Activated CD4-positive, alpha-beta T cell treated with anti-CD3 and anti-CD28 coated beads for 36 hours (primary cell): ENCODE measurements at regions of chr18 and their contacts with region 1.

Region 1: GRCh38 chr18:13137670-13138419 is 80.7 kb upstream of the LDLRAD4 start:
- DNase-seq: peak; percentile 76
- ATAC-seq: peak; percentile 78
- H3K4me3 Mint-ChIP-seq: peak overlapping the region; percentile 83
- H3K27ac Mint-ChIP-seq: peak overlapping the region; percentile 86
- H3K4me1 Mint-ChIP-seq: peaks cover 24% of the 10 kb centered on the region
- H3K27me3 Mint-ChIP-seq: peaks cover 2% of the 10 kb centered on the region

Region 2: GRCh38 chr18:12327510-12328178 is 810.2 kb before region 1 on chr18:
- CTCF ChIA-PET with region 1: no interaction called
- POLR2A ChIA-PET with region 1: no interaction called
- intact Hi-C with region 1: no loop called
- DNase-seq: peak; percentile 90
- ATAC-seq: peak; percentile 95
- H3K4me3 Mint-ChIP-seq: no peak overlapping the region
- H3K27ac Mint-ChIP-seq: no peak overlapping the region
- H3K4me1 Mint-ChIP-seq: peaks cover 4% of the 10 kb centered on the region
- H3K27me3 Mint-ChIP-seq: no peaks in the 10 kb centered on the region

Region 3: GRCh38 chr18:12921178-12921577 is 216.7 kb before region 1 on chr18:
- CTCF ChIA-PET with region 1: no interaction called
- POLR2A ChIA-PET with region 1: no interaction called
- intact Hi-C with region 1: no loop called
- DNase-seq: peak; percentile 42
- ATAC-seq: peak; percentile 95
- H3K4me3 Mint-ChIP-seq: no peak overlapping the region
- H3K27ac Mint-ChIP-seq: no peak overlapping the region
- H3K4me1 Mint-ChIP-seq: peaks cover 8% of the 10 kb centered on the region
- H3K27me3 Mint-ChIP-seq: no peaks in the 10 kb centered on the region

Region 4: DNA sequence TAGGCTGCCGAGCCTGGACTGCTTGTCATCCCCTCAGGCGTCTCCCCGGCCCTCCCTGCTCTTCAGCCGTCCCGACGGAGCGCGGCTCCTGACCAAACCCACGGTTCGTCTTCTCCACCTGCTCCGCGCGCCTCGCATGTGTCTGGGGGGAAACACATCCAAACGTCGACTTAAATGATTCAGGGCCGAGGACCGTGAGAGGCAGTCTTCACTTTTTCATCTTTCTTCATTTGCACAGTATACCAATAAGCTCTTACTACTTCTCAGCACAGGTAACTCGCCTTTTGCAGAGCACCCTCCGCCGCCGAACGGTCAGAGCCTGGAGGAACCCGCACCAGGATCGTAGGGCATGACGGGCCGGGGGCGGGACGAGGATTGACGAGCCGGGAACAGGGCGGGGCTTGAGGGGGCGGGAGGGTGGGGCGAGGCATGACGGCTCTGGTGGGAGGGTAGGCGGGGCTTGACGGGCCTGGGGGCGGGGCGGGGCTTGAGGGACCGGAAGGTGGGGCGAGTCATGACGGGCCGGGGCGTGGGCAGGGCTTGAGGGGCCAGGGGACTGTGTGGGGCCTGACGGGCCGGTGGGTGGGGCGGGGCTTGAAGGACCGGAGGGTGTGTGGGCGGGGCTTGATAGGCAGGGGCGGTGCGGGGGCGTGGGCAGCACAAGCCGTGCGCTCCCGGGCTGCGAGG is 190.3 kb before region 1 on chr18 and contains the start of gene SEH1L:
- CTCF ChIA-PET with region 1: no interaction called
- POLR2A ChIA-PET with region 1: no interaction called
- intact Hi-C with region 1: loop called in 1 of 2 experiments (anchors 1 kb)
- DNase-seq: peak; percentile 100
- ATAC-seq: peak; percentile 86
- H3K4me3 Mint-ChIP-seq: peak within 1 kb of the TSS; percentile 89
- H3K27ac Mint-ChIP-seq: peak within 1 kb of the TSS; percentile 97
- H3K4me1 Mint-ChIP-seq: peaks cover 34% of the 10 kb centered on the region
- H3K27me3 Mint-ChIP-seq: no peaks in the 10 kb centered on the region
- total RNA-seq, gene SEH1L: 100 to 107 TPM

Region 5: DNA sequence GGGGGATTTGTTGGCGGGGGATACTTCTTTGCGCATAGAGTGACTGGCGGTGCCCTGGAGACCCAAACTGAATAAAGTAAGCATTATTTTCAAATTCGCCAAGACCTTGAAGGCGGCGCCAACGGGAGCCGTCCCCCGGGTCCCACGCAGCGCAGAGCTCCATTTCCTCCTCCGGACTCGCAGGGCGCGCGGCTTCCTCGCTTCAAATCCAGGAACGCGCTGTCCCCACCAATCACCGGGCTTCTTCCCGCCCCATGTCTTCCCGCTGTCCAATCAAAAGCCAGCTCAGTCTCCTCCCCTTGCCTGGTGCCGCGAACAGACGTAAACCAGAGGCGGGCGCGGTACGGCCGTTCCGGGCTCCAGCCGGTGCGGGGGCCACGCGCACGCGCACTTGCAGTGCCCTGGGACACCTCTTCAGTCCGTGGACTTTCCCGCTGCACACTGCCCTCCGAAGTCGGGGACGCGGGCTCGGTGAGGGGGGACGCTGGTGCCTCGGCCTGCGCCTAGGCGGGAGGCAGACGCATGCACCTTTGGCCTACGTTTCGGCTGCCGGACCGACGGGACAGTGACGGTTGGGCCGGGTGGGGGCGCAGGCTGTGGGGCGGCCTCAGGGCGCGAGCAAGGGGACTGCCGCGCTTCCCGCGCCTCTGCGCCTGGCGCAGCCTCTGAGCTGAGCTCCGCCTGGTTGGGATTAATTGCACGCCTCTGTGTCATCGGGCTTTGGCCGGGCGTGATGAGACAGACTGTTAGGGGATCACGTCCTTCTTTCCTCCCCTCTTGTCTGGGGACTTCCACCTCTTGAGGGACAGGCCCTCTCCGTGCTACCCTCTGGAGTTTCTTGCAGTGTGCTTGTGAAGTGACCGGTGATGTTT is 146.6 kb before region 1 on chr18 and contains the start of gene CEP192:
- CTCF ChIA-PET with region 1: interaction called, 5 read pairs
- POLR2A ChIA-PET with region 1: interaction called, 4 read pairs
- intact Hi-C with region 1: loop called in 1 of 2 experiments (anchors 2 kb)
- DNase-seq: peak; percentile 98
- ATAC-seq: peak; percentile 90
- H3K4me3 Mint-ChIP-seq: peak within 1 kb of the TSS; percentile 87
- H3K27ac Mint-ChIP-seq: peak within 1 kb of the TSS; percentile 93
- H3K4me1 Mint-ChIP-seq: peaks cover 21% of the 10 kb centered on the region
- H3K27me3 Mint-ChIP-seq: no peaks in the 10 kb centered on the region
- total RNA-seq, gene CEP192: 36.0 to 39.3 TPM

Region 6: GRCh38 chr18:13103366-13103765 is 34.5 kb before region 1 on chr18:
- CTCF ChIA-PET with region 1: no interaction called
- POLR2A ChIA-PET with region 1: no interaction called
- intact Hi-C with region 1: no loop called
- DNase-seq: no peak
- ATAC-seq: peak; percentile 57
- H3K4me3 Mint-ChIP-seq: no peak overlapping the region
- H3K27ac Mint-ChIP-seq: no peak overlapping the region
- H3K4me1 Mint-ChIP-seq: no peaks in the 10 kb centered on the region
- H3K27me3 Mint-ChIP-seq: no peaks in the 10 kb centered on the region

Region 7: GRCh38 chr18:13175754-13176210 is 37.9 kb after region 1 on chr18:
- CTCF ChIA-PET with region 1: no interaction called
- POLR2A ChIA-PET with region 1: interaction called, 10 read pairs
- intact Hi-C with region 1: no loop called
- DNase-seq: peak; percentile 52
- ATAC-seq: peak; percentile 68
- H3K4me3 Mint-ChIP-seq: no peak overlapping the region
- H3K27ac Mint-ChIP-seq: peak overlapping the region; percentile 37
- H3K4me1 Mint-ChIP-seq: peaks cover 34% of the 10 kb centered on the region
- H3K27me3 Mint-ChIP-seq: no peaks in the 10 kb centered on the region

Region 8: GRCh38 chr18:13375302-13376255 is 237.7 kb after region 1 on chr18:
- CTCF ChIA-PET with region 1: no interaction called
- POLR2A ChIA-PET with region 1: no interaction called
- intact Hi-C with region 1: loop called in 1 of 2 experiments (anchors 2 kb)
- DNase-seq: peak; percentile 91
- ATAC-seq: peak; percentile 73
- H3K4me3 Mint-ChIP-seq: peak overlapping the region; percentile 63
- H3K27ac Mint-ChIP-seq: peak overlapping the region; percentile 97
- H3K4me1 Mint-ChIP-seq: peaks cover 84% of the 10 kb centered on the region
- H3K27me3 Mint-ChIP-seq: no peaks in the 10 kb centered on the region

Region 9: DNA sequence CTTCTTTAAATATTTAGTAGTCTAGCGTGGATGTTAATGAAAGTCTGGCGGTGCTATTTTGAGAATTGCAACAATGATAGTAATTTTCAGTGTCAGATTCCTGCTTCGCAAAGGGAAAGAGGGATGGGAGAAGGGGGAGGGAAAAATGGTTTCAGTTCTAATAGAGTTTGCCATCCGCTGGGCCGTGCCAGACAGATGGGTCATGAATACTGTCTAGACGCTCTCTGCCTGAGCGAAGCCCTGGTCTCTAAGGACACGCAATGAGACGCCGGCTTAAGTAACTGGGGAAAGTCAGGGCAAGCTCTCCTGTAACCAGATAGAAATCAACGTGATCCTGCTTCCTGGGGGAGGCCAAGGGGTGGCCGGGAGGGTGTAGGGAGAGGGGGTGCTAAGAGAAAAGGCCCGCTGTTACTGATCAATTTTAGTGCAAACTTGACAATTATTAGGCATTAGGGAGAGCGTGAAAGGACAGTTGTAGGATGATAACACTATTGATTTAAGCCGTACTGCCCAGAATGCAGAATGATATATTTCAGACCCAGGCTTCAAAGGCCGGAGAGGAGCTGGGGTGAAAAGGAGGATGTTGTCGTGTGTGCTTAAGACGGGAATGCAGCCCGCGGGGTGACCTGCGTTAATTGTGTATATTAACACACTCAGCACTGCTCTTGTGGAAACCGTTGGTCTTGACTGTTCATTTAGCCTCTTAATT is 309.9 kb after region 1 on chr18:
- CTCF ChIA-PET with region 1: no interaction called
- POLR2A ChIA-PET with region 1: no interaction called
- intact Hi-C with region 1: no loop called
- DNase-seq: no peak
- ATAC-seq: no peak
- H3K4me3 Mint-ChIP-seq: no peak overlapping the region
- H3K27ac Mint-ChIP-seq: no peak overlapping the region
- H3K4me1 Mint-ChIP-seq: peaks cover 34% of the 10 kb centered on the region
- H3K27me3 Mint-ChIP-seq: no peaks in the 10 kb centered on the region